Colonic mucosa (tissue), 4 donors: ENCODE measurements at regions of chr4 and their contacts with region 1.

Region 1: GRCh38 chr4:57163530-57164459 is 53.6 kb upstream of the IGFBP7 start:
- DNase-seq: peak; percentile 78
- H3K4me3 ChIP-seq: peak overlapping the region; percentile 54
- H3K27ac ChIP-seq: no peak overlapping the region
- H3K4me1 ChIP-seq: peaks cover 7% of the 10 kb centered on the region
- H3K27me3 ChIP-seq: no peaks in the 10 kb centered on the region
- CTCF ChIP-seq: peak; percentile 93

Region 2: GRCh38 chr4:57018980-57019379 is 144.8 kb before region 1 on chr4:
- intact Hi-C with region 1: no loop called
- DNase-seq: no peak
- H3K4me3 ChIP-seq: no peak overlapping the region
- H3K27ac ChIP-seq: no peak overlapping the region
- H3K4me1 ChIP-seq: no peaks in the 10 kb centered on the region
- H3K27me3 ChIP-seq: no peaks in the 10 kb centered on the region
- CTCF ChIP-seq: no peak

Region 3: DNA sequence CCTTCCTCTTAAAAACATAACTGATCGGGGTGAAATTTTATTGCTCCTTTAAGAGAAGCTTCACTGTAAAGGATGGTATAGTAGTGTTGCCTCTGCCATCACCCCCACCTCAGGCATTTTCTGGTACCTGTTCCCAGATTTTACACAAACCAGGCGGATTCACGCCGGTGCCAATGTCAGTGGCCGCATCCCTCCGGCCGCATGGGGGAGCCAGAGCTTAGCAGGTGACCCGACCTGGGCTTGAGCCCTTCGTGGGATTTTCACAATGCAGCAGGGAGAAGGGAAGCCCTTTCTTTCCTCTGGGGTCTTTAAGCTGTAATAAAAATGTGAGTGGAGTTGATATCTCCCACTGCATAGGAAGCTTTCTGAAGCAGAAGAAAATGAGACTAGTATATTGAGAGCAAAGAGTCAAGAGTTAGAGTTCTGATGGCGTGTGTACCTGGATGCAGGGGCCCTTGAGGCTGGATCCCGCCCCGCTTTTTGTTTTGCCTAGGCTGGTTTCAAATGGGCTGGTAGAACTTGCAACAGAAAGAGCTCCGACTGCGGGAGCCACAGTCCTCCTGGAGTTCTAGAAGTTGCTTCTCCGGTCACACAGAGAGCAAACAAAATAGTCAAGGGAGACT is 125.7 kb before region 1 on chr4:
- intact Hi-C with region 1: loop called (anchors 5 kb)
- DNase-seq: peak; percentile 69
- H3K4me3 ChIP-seq: no peak overlapping the region
- H3K27ac ChIP-seq: no peak overlapping the region
- H3K4me1 ChIP-seq: no peaks in the 10 kb centered on the region
- H3K27me3 ChIP-seq: no peaks in the 10 kb centered on the region
- CTCF ChIP-seq: peak; percentile 70

Region 4: GRCh38 chr4:57091657-57092162 is 72.1 kb before region 1 on chr4:
- intact Hi-C with region 1: no loop called
- DNase-seq: no peak
- H3K4me3 ChIP-seq: no peak overlapping the region
- H3K27ac ChIP-seq: no peak overlapping the region
- H3K4me1 ChIP-seq: no peaks in the 10 kb centered on the region
- H3K27me3 ChIP-seq: no peaks in the 10 kb centered on the region
- CTCF ChIP-seq: no peak

Region 5: DNA sequence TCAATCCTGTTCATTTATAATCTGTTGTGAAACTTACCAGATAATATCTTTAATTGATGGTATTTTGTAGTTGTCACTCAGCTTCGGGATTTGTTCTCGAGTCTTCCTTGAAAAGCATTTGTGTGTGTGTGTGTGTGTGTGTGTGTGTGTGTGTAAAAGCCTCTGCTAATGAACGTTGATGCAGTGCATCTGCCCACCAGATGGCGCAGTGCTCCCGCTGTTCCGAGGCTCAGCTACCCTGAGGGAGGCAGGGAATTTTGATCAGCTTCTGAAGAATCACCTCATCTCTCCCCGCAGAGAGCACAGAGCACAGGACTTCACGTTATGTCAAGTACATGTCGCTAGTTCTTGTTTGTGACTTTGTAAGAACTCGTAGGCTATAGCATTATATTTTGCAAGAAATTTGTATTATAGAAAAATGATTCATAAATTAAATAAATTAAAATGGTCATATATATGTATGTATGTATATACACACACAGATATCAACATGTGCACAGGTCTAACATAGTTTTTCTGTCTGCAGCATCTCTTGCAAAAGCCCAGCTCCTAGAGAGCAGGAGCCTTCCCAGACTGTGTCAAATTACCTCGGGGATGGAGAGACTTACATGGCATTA is 263.1 kb after region 1 on chr4:
- intact Hi-C with region 1: loop called (anchors 10 kb)
- DNase-seq: peak; percentile 65
- H3K4me3 ChIP-seq: no peak overlapping the region
- H3K27ac ChIP-seq: no peak overlapping the region
- H3K4me1 ChIP-seq: no peaks in the 10 kb centered on the region
- H3K27me3 ChIP-seq: no peaks in the 10 kb centered on the region
- CTCF ChIP-seq: peak; percentile 39